Mammary epithelial cell (primary cell): ENCODE measurements at regions of chr7 and their contacts with region 1.

Region 1: GRCh38 chr7:156764016-156764669 is 123.6 kb downstream of the RNF32 start:
- DNase-seq: peak; percentile 58
- H3K4me3 ChIP-seq: no peak overlapping the region
- H3K27ac ChIP-seq: no peak overlapping the region
- H3K4me1 ChIP-seq: no peaks in the 10 kb centered on the region
- H3K27me3 ChIP-seq: no peaks in the 10 kb centered on the region
- CTCF ChIP-seq: peak; percentile 61 to 79

Region 2: DNA sequence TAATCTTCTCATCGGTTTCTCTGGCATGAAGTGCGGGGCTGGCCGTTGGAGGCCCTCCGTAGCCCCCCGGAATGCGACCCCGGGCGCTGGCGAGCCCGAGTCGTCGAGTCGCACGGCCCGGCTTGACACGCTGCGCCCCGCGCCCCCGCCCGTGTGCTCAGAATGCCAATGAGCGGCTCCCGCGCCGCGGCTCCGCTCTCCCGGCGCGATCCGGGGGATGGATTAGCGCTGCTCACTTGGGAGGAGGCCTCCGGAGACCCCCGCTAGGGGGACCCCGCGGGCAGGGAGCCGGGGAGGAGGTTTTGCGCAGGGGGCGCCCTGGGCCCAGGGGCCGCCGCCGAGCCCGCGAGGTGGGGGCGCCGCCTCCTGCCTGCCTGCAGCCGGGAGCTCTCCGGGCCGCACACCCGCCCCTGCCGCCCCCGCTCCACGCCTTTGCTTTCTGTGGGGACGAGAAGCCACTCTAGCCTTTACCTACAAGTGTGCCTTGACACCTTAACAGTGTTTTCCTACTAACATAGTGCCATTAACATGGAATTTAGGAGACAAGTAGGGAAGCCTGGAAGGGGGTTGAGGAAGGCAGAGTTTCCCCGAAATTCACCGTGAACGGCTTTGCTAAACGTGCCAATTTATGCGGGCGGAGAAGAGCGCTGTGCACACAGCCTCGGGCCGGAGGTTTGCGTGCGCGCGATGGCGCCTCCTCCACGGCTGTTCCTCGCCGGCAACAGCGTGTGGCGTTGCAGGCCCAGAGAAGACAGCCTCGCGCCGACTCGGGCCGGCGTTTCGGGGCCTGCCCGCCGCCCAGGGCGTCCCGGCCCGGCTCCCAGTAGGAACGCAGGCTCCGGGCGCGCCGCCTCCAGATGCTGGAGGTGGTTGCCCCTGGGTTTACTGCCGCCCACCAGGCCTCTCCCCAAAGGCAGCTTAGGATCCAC is 959.0 kb before region 1 on chr7:
- CTCF ChIA-PET with region 1: no interaction called
- dilution Hi-C with region 1: no loop called
- in situ Hi-C with region 1: no loop called
- intact Hi-C with region 1: loop called (anchors 2 kb)
- DNase-seq: peak; percentile 62
- H3K4me3 ChIP-seq: peak overlapping the region; percentile 32 to 54 (median 49)
- H3K27ac ChIP-seq: no peak overlapping the region
- H3K4me1 ChIP-seq: peaks cover 15% of the 10 kb centered on the region
- H3K27me3 ChIP-seq: peaks cover 27% of the 10 kb centered on the region
- CTCF ChIP-seq: peak; percentile 28 to 61

Region 3: DNA sequence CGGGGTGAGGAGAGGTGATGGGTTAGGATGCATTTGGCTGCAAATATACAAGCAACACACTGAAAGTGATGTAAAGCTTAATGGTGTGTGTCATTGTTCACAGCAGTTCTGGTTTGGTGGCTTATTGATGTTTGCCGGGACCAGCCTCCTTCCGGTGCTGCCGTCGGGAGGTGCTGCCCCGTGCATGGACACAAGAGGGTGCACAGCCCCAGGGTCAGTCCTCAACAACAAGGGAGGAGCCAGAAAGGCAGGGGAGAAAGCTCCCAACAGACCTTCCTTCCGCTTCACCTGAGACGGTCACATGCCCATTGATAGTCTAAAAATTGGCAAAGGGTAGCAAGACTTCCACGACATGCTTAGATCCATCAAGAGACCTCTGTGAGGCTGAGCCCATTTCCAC is 114.1 kb before region 1 on chr7:
- CTCF ChIA-PET with region 1: no interaction called
- dilution Hi-C with region 1: no loop called
- in situ Hi-C with region 1: no loop called
- intact Hi-C with region 1: loop called (anchors 10 kb)
- DNase-seq: no peak
- H3K4me3 ChIP-seq: no peak overlapping the region
- H3K27ac ChIP-seq: no peak overlapping the region
- H3K4me1 ChIP-seq: no peaks in the 10 kb centered on the region
- H3K27me3 ChIP-seq: no peaks in the 10 kb centered on the region
- CTCF ChIP-seq: peak; percentile 13 to 34